H1 (cell line): ENCODE measurements at regions of chr1 and their contacts with region 1.

Region 1: DNA sequence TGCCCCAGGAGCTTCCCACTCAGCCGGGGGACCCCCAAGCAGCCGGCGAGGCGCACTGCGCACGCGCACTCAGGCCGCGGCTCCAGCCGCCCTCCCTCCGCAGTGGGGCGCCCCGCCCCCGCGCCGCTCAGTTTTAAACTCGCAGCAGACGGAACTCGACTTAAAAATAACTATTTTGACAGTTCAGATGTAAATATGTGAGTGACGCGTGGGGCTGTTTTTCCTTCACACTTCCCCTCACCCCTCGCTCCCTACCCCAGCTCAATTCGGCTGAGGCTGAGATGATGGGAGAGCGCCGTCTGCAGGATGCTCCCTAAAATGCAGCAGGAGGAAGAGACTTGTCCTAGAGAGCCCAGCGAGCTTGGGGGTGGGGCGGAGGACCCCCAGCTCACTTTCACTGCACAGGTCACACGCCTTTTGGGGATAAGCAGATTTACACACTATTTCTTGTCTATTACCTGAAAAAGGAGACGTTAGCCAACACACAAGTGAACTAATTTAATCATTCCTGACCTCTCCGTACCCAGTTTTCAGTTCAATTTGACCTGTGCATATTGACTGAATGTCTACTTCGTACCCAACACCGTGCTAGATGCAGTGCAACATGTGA is 8.9 kb upstream of the LEMD1 start:
- DNase-seq: peak in 1 of 2 experiments; percentile 91
- H3K4me3 ChIP-seq: peak overlapping the region; percentile 25 to 73 (median 44)
- H3K27ac ChIP-seq: no peak overlapping the region
- H3K4me1 ChIP-seq: peaks cover 2 to 5% (median 3%) of the 10 kb centered on the region in 4 experiments; a peak in 4 of 7 replicates
- H3K27me3 ChIP-seq: peaks cover 0 to 20% (median 11%) of the 10 kb centered on the region in 4 experiments; a peak in 6 of 7 replicates
- CTCF ChIP-seq: peak; percentile 85 to 97 (median 96)
- EP300 ChIP-seq: 0 out of 3 replicates have a peak, but pooled peaks of 1 of the 2 experiments have one; percentile 4
- POLR2A ChIP-seq: no peak; a peak in 1 of 3 replicates
- RAD21 ChIP-seq: peak; percentile 69 to 82

Region 2: DNA sequence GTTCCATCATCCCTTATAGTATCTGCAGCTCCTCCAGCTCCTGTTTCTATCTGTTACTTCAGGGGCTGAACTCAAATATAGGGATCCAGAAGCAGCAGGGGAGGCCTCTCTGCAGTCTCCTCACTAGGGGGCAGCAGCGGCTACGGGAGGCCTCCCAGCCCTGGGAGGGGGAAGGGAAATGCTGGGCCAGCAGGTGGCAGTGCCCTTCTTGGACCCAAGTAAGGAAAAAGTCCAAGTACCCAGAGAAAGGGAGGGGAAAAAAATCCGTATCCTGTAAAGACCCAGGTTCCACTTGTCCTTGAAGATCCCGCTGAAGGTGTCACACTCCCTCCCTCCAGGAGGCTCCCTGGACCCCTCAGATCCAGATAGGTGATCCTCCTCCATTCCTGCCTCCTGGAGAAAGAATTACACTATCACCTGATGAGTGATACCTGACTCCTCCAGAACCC is 95.1 kb before region 1 on chr1:
- CTCF ChIA-PET with region 1: interaction called, 18 read pairs
- POLR2A ChIA-PET with region 1: interaction called, 3 read pairs
- DNase-seq: peak; percentile 78 to 91
- H3K4me3 ChIP-seq: no peak overlapping the region
- H3K27ac ChIP-seq: no peak overlapping the region
- H3K4me1 ChIP-seq: peaks cover 0 to 3% (median under 1%) of the 10 kb centered on the region in 4 experiments; a peak in 4 of 7 replicates
- H3K27me3 ChIP-seq: no peaks in the 10 kb centered on the region; a peak in 3 of 7 replicates
- CTCF ChIP-seq: peak; percentile 93 to 99 (median 94)
- EP300 ChIP-seq: no peak
- POLR2A ChIP-seq: no peak
- RAD21 ChIP-seq: peak; percentile 78 to 89

Region 3: GRCh38 chr1:205344066-205344928 is 86.5 kb before region 1 on chr1:
- CTCF ChIA-PET with region 1: interaction called, 13 read pairs
- POLR2A ChIA-PET with region 1: no interaction called
- DNase-seq: peak in 1 of 2 experiments; percentile 72
- H3K4me3 ChIP-seq: peak overlapping the region; percentile 52 to 70 (median 56)
- H3K27ac ChIP-seq: no peak overlapping the region
- H3K4me1 ChIP-seq: peaks cover 5 to 10% (median 8%) of the 10 kb centered on the region in 4 experiments
- H3K27me3 ChIP-seq: peaks cover 11 to 30% (median 29%) of the 10 kb centered on the region in 4 experiments
- CTCF ChIP-seq: no peak
- EP300 ChIP-seq: no peak
- POLR2A ChIP-seq: no peak
- RAD21 ChIP-seq: no peak

Region 4: DNA sequence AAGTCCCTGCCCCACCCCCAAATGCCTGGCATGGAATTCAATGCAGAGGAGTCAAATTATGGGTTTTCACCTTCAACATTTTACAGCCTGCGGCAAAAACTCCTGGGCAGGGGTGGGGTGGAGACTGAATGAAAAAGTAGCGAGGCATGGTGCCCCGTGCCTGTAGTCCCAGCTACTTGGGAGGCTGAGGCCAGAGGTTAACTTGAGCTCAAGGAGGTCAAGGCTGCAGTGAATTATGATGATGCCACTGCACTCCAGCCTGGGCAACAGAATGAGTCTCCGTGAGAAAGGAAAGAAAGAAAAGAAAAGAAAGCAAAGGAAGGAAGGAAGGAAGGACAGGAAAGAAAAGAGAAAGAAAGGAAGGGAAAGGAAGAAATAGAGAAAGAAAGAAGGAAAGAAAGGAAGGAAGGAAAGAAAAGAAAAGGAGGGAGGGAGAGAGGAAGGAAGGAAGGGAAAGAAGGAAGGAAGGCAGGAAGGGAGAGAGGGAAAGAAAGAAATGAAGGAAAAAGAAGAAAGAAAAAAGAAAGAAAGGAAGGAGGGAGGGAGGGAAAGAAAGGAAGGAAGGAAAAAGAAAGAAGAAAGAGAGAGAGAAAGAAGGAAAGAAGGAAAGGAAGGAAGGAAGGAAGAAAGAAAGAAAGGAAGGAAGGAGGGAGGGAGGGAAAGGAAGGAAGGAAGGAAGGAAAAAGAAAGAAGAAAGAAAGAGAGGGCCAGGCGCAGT is 20.1 kb before region 1 on chr1:
- CTCF ChIA-PET with region 1: interaction called, 146 read pairs
- POLR2A ChIA-PET with region 1: interaction called, 3 read pairs
- DNase-seq: no peak
- H3K4me3 ChIP-seq: no peak overlapping the region
- H3K27ac ChIP-seq: no peak overlapping the region
- H3K4me1 ChIP-seq: no peaks in the 10 kb centered on the region
- H3K27me3 ChIP-seq: peaks cover 0 to 1% (median 0%) of the 10 kb centered on the region in 4 experiments; a peak in 1 of 7 replicates
- CTCF ChIP-seq: no peak
- EP300 ChIP-seq: no peak
- POLR2A ChIP-seq: no peak
- RAD21 ChIP-seq: no peak

Region 5: GRCh38 chr1:205458777-205459566 is 28.2 kb after region 1 on chr1:
- CTCF ChIA-PET with region 1: interaction called, 479 read pairs
- POLR2A ChIA-PET with region 1: interaction called, 14 read pairs
- DNase-seq: peak in 1 of 2 experiments; percentile 80
- H3K4me3 ChIP-seq: no peak overlapping the region
- H3K27ac ChIP-seq: no peak overlapping the region
- H3K4me1 ChIP-seq: peaks cover 7 to 23% (median 13%) of the 10 kb centered on the region in 4 experiments
- H3K27me3 ChIP-seq: peaks cover 0 to 2% (median 0%) of the 10 kb centered on the region in 4 experiments; a peak in 2 of 7 replicates
- CTCF ChIP-seq: no peak
- EP300 ChIP-seq: no peak
- POLR2A ChIP-seq: no peak
- RAD21 ChIP-seq: peak in 1 of 2 experiments; percentile 32; a peak in 1 of 4 replicates

Region 6: DNA sequence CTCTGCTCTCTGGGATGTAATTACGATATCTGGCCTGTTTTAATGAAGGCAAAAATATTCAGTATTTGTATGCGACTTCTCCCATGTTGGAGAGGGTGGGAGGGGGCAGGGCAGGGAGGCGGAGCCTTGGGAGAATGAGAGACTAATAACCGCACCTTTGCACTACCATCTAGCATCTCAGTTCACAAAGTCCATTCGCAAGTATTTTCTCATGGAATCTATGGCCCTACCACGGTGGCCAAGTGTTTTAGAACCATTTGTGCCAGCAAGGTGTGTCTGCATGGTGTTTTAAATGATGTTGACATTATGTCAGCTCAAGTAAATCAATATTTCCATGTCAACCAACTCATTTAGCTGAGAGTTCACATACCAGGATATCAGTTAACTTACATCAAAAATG is 39.3 kb after region 1 on chr1:
- CTCF ChIA-PET with region 1: interaction called, 767 read pairs
- POLR2A ChIA-PET with region 1: no interaction called
- DNase-seq: no peak
- H3K4me3 ChIP-seq: no peak overlapping the region
- H3K27ac ChIP-seq: no peak overlapping the region
- H3K4me1 ChIP-seq: peaks cover 0 to 5% (median 4%) of the 10 kb centered on the region in 4 experiments; a peak in 6 of 7 replicates
- H3K27me3 ChIP-seq: no peaks in the 10 kb centered on the region; a peak in 2 of 7 replicates
- CTCF ChIP-seq: no peak
- EP300 ChIP-seq: no peak
- POLR2A ChIP-seq: no peak
- RAD21 ChIP-seq: no peak

Region 7: GRCh38 chr1:205477759-205478247 is 47.0 kb after region 1 on chr1:
- CTCF ChIA-PET with region 1: interaction called, 767 read pairs
- POLR2A ChIA-PET with region 1: interaction called, 3 read pairs
- DNase-seq: no peak
- H3K4me3 ChIP-seq: no peak overlapping the region
- H3K27ac ChIP-seq: no peak overlapping the region
- H3K4me1 ChIP-seq: peaks cover 0 to 29% (median 19%) of the 10 kb centered on the region in 4 experiments; a peak in 6 of 7 replicates
- H3K27me3 ChIP-seq: peaks cover 0 to 2% (median 0%) of the 10 kb centered on the region in 4 experiments; a peak in 3 of 7 replicates
- CTCF ChIP-seq: no peak
- EP300 ChIP-seq: no peak
- POLR2A ChIP-seq: no peak
- RAD21 ChIP-seq: no peak